Activated T-helper 1 cell treated with anti-CD3 and anti-CD28 coated beads, Interleukin-12 subunit alpha, Interleukin-12 subunit beta, Interleukin-2, Interleukin-4 antibody, amounts not matched to agents 30 ng/mL and 10 ng/mL and 1 ng/mL, durations not matched to agents 14 hours and 24 hours and 36 hours (primary cell): ENCODE measurements at regions of chr3 and their contacts with region 1.

Region 1: GRCh38 chr3:136250226-136250902 is at the start of gene PCCB:
- DNase-seq: peak; percentile 88
- H3K4me3 Mint-ChIP-seq: peak within 1 kb of the TSS; percentile 89
- H3K27ac Mint-ChIP-seq: peak within 1 kb of the TSS; percentile 91
- H3K4me1 Mint-ChIP-seq: peaks cover 21% of the 10 kb centered on the region
- H3K27me3 Mint-ChIP-seq: no peaks in the 10 kb centered on the region
- total RNA-seq, gene PCCB: 41.4 and 41.7 TPM in 2 replicates

Region 2: GRCh38 chr3:136093771-136094170 is 156.6 kb before region 1 on chr3:
- intact Hi-C with region 1: no loop called
- DNase-seq: no peak
- H3K4me3 Mint-ChIP-seq: no peak overlapping the region
- H3K27ac Mint-ChIP-seq: no peak overlapping the region
- H3K4me1 Mint-ChIP-seq: no peaks in the 10 kb centered on the region
- H3K27me3 Mint-ChIP-seq: peaks cover 15% of the 10 kb centered on the region

Region 3: GRCh38 chr3:136149667-136150066 is 100.7 kb before region 1 on chr3:
- intact Hi-C with region 1: loop called (anchors 5 kb)
- DNase-seq: no peak
- H3K4me3 Mint-ChIP-seq: no peak overlapping the region
- H3K27ac Mint-ChIP-seq: peak overlapping the region; percentile 63
- H3K4me1 Mint-ChIP-seq: peaks cover 44% of the 10 kb centered on the region
- H3K27me3 Mint-ChIP-seq: no peaks in the 10 kb centered on the region

Region 4: DNA sequence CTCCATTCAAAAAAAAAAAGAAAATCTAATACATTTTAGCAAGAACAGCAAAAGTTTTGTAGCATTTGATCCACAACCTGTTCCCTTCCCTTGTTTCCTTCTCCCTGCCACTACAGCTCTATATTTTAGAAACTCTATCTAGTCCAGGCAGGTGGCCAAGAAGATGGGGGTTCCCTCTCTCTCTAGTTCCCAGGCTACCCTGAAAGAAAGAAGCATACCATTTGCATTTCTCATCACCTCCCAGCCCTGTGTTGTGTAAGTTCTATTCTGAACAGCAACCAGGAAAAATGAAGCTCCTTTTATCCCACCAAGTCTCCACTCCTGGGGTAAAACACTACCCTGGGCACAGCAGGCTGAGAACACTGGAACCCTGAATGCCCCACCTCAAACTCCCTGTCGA is 99.8 kb after region 1 on chr3:
- intact Hi-C with region 1: loop called (anchors 2 kb)
- DNase-seq: no peak
- H3K4me3 Mint-ChIP-seq: no peak overlapping the region
- H3K27ac Mint-ChIP-seq: no peak overlapping the region
- H3K4me1 Mint-ChIP-seq: peaks cover 20% of the 10 kb centered on the region
- H3K27me3 Mint-ChIP-seq: no peaks in the 10 kb centered on the region